PC-9 (cell line): ENCODE measurements at regions of chr6 and their contacts with region 1.

Region 1: GRCh38 chr6:119349323-119350042 is at the start of gene MAN1A1:
- DNase-seq: peak; percentile 69 to 88
- H3K4me3 ChIP-seq: peak within 1 kb of the TSS; percentile 73
- H3K27ac ChIP-seq: peak within 1 kb of the TSS; percentile 19
- H3K4me1 ChIP-seq: peaks cover 40% of the 10 kb centered on the region
- H3K27me3 ChIP-seq: no peaks in the 10 kb centered on the region
- CTCF ChIP-seq: 0 out of 2 replicates have a peak, but pooled peaks have one; percentile 23
- total RNA-seq, gene MAN1A1: 13.3 and 13.4 TPM in 2 replicates

Region 2: GRCh38 chr6:119484637-119484997 is 135.1 kb after region 1 on chr6:
- CTCF ChIA-PET with region 1: no interaction called
- POLR2A ChIA-PET with region 1: no interaction called
- intact Hi-C with region 1: loop called (anchors 5 kb)
- DNase-seq: peak; percentile 72 to 99
- H3K4me3 ChIP-seq: no peak overlapping the region
- H3K27ac ChIP-seq: peak overlapping the region; percentile 75
- H3K4me1 ChIP-seq: peaks cover 29% of the 10 kb centered on the region
- H3K27me3 ChIP-seq: no peaks in the 10 kb centered on the region
- CTCF ChIP-seq: no peak

Region 3: DNA sequence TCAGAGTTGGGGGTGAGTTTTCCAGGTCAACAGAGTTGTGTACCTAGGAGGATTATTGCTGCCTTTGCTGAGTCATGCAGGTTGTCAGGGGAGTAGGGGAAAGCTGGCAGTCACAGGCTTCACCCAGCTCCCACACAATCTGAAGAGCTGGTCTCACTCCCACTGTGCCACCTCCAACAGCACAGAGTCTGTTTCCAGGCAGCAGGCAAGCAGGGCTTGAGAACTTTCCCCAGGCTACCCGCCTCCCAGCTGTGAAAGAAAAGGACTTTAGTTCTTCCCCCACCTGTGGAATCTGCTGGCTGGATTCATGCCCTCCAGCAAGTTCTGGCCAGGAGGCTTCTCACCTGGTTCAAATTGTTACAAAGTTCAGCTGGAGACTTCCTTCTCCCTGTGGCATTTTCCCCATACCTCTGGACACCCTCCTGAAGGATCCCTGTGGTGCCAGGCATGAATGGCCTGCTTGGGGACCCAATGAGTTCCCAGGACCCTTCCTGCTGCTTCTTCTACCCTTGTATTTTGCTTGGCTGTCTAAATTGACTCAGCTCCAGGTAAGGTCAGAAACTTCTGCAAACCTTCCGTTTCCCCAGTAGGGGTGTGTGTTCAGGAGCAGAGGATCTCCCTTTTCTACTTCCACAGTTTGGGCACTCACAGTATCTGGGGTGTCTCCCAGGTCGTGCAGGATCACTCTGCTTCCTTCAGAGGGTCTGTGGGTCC is 378.2 kb after region 1 on chr6:
- CTCF ChIA-PET with region 1: no interaction called
- POLR2A ChIA-PET with region 1: no interaction called
- intact Hi-C with region 1: loop called (anchors 1 kb)
- DNase-seq: peak; percentile 86 to 99
- H3K4me3 ChIP-seq: peak overlapping the region; percentile 56
- H3K27ac ChIP-seq: peak overlapping the region; percentile 98
- H3K4me1 ChIP-seq: peaks cover 41% of the 10 kb centered on the region
- H3K27me3 ChIP-seq: no peaks in the 10 kb centered on the region
- CTCF ChIP-seq: peak; percentile 73

Region 4: DNA sequence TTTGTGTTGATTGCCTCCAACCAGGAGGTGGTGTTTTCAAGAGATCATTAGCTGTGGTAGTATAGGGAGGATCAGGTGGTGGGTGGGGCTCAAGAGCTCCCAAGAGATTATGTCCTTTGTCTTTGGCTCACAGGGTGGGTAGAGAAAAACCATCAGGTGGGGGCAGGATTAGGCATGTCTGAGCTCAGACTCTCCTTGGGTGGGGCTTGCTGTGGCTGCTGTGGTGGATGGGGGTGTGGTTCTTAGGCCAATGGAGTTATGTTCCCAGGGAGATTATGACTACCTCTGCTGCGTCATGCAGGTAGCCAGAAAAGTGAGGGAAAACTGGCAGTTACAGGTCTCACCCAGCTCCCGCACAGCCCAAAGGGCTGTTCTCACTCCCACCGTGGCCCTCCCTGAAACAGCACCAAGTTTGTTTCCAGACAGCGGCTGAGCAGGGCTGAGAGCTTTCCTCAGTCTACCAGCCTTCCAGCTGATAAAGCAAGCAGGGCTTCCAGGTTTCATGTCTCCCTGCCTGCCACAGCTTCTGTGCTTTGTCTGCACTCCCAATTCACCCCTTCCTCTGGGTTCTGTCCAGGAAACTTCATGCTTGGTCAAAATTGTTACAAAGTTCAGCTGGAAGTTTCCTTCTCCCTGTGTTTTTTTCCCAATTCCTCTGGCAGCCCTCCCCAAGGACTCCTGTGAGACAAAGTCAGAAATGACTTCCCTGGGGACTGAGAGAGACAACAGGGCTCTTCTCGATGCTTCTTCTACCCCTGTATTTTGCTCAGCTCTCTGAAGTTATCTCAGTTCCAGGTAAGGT is 481.2 kb after region 1 on chr6:
- CTCF ChIA-PET with region 1: no interaction called
- POLR2A ChIA-PET with region 1: interaction called, 4 read pairs
- intact Hi-C with region 1: loop called (anchors 1 kb)
- DNase-seq: peak; percentile 70 to 77
- H3K4me3 ChIP-seq: no peak overlapping the region
- H3K27ac ChIP-seq: peak overlapping the region; percentile 71
- H3K4me1 ChIP-seq: peaks cover 55% of the 10 kb centered on the region
- H3K27me3 ChIP-seq: no peaks in the 10 kb centered on the region
- CTCF ChIP-seq: no peak

Region 5: GRCh38 chr6:120826253-120826652 is 1476.8 kb after region 1 on chr6:
- CTCF ChIA-PET with region 1: no interaction called
- POLR2A ChIA-PET with region 1: no interaction called
- intact Hi-C with region 1: loop called (anchors 5 kb)
- DNase-seq: peak; percentile 37 to 42
- H3K4me3 ChIP-seq: no peak overlapping the region
- H3K27ac ChIP-seq: no peak overlapping the region
- H3K4me1 ChIP-seq: no peaks in the 10 kb centered on the region
- H3K27me3 ChIP-seq: no peaks in the 10 kb centered on the region
- CTCF ChIP-seq: peak; percentile 93